Cardiac septum (tissue), 1 donor: ENCODE measurements at regions of chr12 and their contacts with region 1.

Region 1: DNA sequence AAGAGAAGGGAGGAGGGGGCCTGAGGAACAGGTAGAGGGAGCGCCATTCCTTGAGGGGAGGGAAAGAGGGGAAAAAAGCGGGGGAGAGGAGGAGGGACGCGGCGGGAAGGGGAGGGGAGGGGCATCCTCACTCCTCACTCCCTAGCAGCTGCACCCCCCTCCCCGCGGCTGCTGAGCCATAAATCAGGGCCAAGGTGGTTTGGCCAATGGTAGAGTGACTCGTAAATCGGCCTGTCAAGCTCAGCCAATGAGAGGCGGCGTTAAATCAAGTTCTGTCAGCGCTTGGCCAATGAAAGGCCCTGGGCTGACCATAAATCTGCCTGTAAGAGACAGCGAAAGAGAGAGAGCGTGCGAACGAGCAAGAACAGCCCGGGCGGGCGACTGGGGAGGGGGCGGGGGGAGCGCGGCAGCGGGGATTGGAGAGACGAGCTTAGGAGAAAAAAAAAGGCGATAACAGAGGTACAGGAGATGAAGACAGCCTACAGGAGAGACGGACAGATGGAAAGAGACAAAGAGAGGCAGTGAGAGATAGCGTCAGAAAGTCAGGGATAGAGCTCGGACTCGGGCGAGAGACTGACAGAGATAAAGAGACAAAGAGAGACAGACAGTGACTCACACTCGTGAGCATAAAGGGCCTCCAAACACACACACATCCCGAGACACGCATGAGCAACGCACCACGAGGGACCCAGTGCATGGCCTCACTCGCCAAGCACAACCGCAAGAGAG is 5.1 kb downstream of the GPR84 start:
- DNase-seq: peak; percentile 97

Region 2: GRCh38 chr12:54214553-54215406 is 144.4 kb before region 1 on chr12:
- intact Hi-C with region 1: loop called (anchors 5 kb)
- DNase-seq: peak; percentile 94

Region 3: GRCh38 chr12:54279866-54280467 is 79.2 kb before region 1 on chr12 and contains the start of gene CBX5:
- intact Hi-C with region 1: loop called (anchors 5 kb)
- DNase-seq: peak; percentile 99
- total RNA-seq, gene CBX5: 39.5 TPM

Region 4: DNA sequence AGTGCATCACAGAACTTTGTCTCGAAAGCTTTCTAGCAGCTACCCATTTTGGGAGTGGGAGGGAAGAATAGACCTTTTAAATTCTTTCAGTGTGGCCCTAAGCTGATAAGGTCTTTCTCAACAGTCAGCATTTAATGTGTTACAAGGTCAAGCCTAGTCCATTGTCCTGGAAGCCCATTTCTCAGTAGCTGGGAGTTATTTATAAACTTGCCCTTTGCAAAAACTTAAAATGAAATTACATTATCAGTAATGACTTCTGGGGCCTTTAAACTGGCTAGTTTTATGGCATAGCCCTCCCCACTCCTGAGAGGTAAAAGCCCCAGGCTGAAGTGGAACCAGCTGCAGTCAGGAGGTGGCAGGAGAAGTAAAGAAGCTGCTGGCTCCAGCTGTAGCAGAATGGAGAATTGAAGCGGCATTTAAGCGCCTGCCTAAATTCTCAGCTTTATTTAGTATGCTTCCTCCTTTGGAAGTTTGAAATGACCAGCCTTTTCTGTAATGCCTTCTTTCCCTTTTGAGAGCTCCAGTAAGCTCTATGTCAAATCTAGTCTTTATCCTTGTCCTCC is 21.8 kb before region 1 on chr12:
- intact Hi-C with region 1: loop called (anchors 1 kb)
- DNase-seq: no peak